PC-9 (cell line): ENCODE measurements at regions of chr1 and their contacts with region 1.

Region 1: DNA sequence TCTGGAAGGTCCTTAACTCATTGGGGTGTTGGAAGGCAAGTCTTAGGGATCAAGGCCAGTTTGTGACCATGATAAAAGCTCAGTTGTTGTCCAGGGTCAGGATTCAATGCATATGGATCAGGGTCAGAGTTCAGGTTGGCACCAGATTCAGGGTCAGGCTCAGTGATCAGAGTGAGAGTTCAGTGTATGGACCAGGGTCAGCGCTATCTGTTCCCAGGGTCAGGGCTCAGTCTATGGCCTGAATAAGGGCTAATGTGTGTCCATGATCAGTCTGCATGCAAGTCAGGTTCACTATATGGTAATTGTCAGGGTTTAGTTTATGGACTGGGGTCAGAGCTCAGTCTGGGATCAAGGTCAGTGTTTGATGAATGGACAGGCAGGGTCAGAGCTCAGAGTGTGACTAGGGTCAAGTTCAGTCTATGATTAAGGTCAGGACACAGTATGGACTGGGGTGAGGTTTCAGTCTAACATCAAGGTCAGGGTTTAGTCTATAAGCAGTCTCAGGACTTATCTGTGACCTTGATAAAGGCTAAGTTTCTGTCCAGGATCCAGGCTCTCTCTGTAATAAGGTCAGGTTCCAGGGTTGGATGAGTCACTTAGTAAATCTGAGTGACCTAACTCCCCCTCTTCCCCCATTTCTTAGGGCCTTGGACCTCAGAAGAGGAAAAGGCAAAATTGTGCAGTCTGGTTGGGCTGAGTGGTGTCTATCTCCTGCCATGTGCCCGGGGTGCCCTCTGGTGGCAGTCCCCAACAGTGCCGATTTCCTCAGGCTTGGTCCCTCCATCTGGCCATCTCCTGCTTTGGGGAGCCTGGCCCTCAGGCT is 23.8 kb downstream of the KNCN start:
- DNase-seq: peak; percentile 64 to 87
- H3K4me3 ChIP-seq: no peak overlapping the region
- H3K27ac ChIP-seq: no peak overlapping the region
- H3K4me1 ChIP-seq: peaks cover 28% of the 10 kb centered on the region
- H3K27me3 ChIP-seq: no peaks in the 10 kb centered on the region
- CTCF ChIP-seq: peak; percentile 92

Region 2: DNA sequence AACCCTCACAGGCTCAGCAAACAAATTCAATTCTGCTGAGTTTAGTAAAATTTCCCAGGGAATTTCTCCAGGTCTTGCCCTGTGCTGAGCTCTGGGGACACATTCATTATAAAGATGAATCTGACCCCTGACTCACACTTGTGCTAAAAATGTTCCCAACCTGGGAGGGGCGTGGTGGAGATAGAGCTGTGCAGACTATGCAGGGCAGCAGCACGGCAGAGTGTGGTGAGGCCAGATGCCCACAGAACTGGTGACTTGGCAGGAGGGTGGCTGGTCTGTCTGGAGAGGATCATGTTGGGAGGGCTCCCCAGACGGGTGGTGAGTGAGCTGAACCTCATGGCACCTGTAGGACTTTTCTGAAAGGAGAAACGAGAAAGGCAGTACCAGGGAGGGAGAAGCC is 102.0 kb before region 1 on chr1:
- CTCF ChIA-PET with region 1: interaction called, 12 read pairs
- POLR2A ChIA-PET with region 1: no interaction called
- intact Hi-C with region 1: no loop called
- DNase-seq: no peak
- H3K4me3 ChIP-seq: no peak overlapping the region
- H3K27ac ChIP-seq: no peak overlapping the region
- H3K4me1 ChIP-seq: no peaks in the 10 kb centered on the region
- H3K27me3 ChIP-seq: no peaks in the 10 kb centered on the region; the same call in 1 of the 2 replicates
- CTCF ChIP-seq: no peak

Region 3: GRCh38 chr1:46442317-46443161 is 85.1 kb before region 1 on chr1:
- CTCF ChIA-PET with region 1: interaction called, 8 read pairs
- POLR2A ChIA-PET with region 1: interaction called, 4 read pairs
- intact Hi-C with region 1: loop called (anchors 1 kb)
- DNase-seq: peak; percentile 61 to 91
- H3K4me3 ChIP-seq: peak overlapping the region; percentile 58
- H3K27ac ChIP-seq: no peak overlapping the region
- H3K4me1 ChIP-seq: 0 out of 2 replicates have a peak, but pooled peaks cover 8% of the 10 kb centered on the region
- H3K27me3 ChIP-seq: peaks cover 5% of the 10 kb centered on the region
- CTCF ChIP-seq: peak; percentile 93

Region 4: GRCh38 chr1:46466477-46467182 is 61.1 kb before region 1 on chr1:
- CTCF ChIA-PET with region 1: no interaction called
- POLR2A ChIA-PET with region 1: no interaction called
- intact Hi-C with region 1: no loop called
- DNase-seq: no peak
- H3K4me3 ChIP-seq: no peak overlapping the region; the same call in 1 of the 2 replicates
- H3K27ac ChIP-seq: no peak overlapping the region
- H3K4me1 ChIP-seq: no peaks in the 10 kb centered on the region
- H3K27me3 ChIP-seq: peaks cover 45% of the 10 kb centered on the region
- CTCF ChIP-seq: no peak

Region 5: DNA sequence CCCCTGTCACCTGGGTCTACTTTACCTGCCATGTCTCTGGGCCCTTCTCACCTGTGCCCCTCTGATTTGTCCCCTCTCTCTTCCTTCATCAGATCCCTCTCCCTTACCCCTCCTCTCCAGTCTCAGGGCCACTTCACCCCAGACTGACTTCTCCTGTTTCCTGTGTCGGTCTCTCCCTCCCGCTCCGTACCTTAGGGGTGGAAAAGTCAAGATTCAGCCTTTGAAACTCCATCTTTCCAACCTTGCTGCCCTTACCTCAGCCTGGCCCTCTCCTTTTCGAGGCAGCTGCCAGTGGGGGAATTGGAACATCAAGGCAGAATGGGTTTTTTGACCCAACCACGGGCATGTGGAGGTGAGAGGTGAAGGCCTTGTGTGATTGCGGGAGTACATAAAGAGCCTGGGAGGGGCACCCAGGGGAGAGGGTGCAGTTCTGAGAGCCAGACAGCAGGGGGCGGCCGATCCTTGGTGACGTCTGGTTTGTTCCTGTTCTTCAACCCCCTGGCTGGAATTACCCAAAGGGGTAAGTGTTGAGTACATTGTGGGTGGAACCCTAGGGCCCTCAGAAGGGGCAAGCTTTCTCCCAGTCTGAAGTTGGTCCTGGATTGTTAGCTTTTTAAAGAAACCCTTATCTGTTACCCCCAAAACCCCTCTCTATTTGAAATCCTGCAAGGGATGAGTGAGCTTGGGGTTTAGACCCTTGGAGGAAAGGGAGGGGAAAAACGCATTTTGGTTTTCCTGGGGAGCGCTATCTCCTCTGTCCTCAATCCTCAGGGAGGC is 50.3 kb before region 1 on chr1:
- CTCF ChIA-PET with region 1: interaction called, 14 read pairs
- POLR2A ChIA-PET with region 1: interaction called, 3 read pairs
- intact Hi-C with region 1: loop called (anchors 1 kb)
- DNase-seq: peak; percentile 46 to 82
- H3K4me3 ChIP-seq: no peak overlapping the region
- H3K27ac ChIP-seq: no peak overlapping the region
- H3K4me1 ChIP-seq: peaks cover 9% of the 10 kb centered on the region; the same call in 1 of the 2 replicates
- H3K27me3 ChIP-seq: 0 out of 2 replicates have a peak, but pooled peaks cover 5% of the 10 kb centered on the region
- CTCF ChIP-seq: peak; percentile 96

Region 6: GRCh38 chr1:46569884-46570725 is 42.4 kb after region 1 on chr1:
- CTCF ChIA-PET with region 1: no interaction called
- POLR2A ChIA-PET with region 1: no interaction called
- intact Hi-C with region 1: no loop called
- DNase-seq: no peak
- H3K4me3 ChIP-seq: no peak overlapping the region
- H3K27ac ChIP-seq: no peak overlapping the region
- H3K4me1 ChIP-seq: no peaks in the 10 kb centered on the region
- H3K27me3 ChIP-seq: no peaks in the 10 kb centered on the region
- CTCF ChIP-seq: no peak

Region 7: GRCh38 chr1:46603858-46604549 is 76.3 kb after region 1 on chr1 and contains the start of gene MKNK1:
- CTCF ChIA-PET with region 1: interaction called, 16 read pairs
- POLR2A ChIA-PET with region 1: no interaction called
- intact Hi-C with region 1: no loop called
- DNase-seq: peak; percentile 85 to 100
- H3K4me3 ChIP-seq: peak within 1 kb of the TSS; percentile 95
- H3K27ac ChIP-seq: peak within 1 kb of the TSS; percentile 37
- H3K4me1 ChIP-seq: peaks cover 29% of the 10 kb centered on the region
- H3K27me3 ChIP-seq: no peaks in the 10 kb centered on the region
- CTCF ChIP-seq: no peak
- total RNA-seq, gene MKNK1: 103 and 112 TPM in 2 replicates

Region 8: GRCh38 chr1:47002211-47002610 is 474.5 kb after region 1 on chr1:
- CTCF ChIA-PET with region 1: no interaction called
- POLR2A ChIA-PET with region 1: no interaction called
- intact Hi-C with region 1: loop called (anchors 5 kb)
- DNase-seq: no peak
- H3K4me3 ChIP-seq: no peak overlapping the region
- H3K27ac ChIP-seq: no peak overlapping the region
- H3K4me1 ChIP-seq: no peaks in the 10 kb centered on the region
- H3K27me3 ChIP-seq: no peaks in the 10 kb centered on the region
- CTCF ChIP-seq: peak; percentile 58